ENCODE measurements at regions of chr19 and their contacts with region 1.

Region 1: GRCh38 chr19:6372594-6373095 is at the start of gene ALKBH7:
- DNase-seq: peak; percentile 96 to 100 (median 99)
- H3K4me3 ChIP-seq: peak within 1 kb of the TSS; percentile 88
- H3K27ac ChIP-seq: peak within 1 kb of the TSS; percentile 63 to 97
- H3K4me1 ChIP-seq: peaks cover 5% of the 10 kb centered on the region
- H3K27me3 ChIP-seq: no peaks in the 10 kb centered on the region
- CTCF ChIP-seq: peak in 1 of 3 donors; percentile 24
- EP300 ChIP-seq: peak; percentile 16
- POLR2A ChIP-seq: peak; percentile 35
- total RNA-seq, gene ALKBH7: 66.7 to 118 (median 99.0) TPM

Region 2: GRCh38 chr19:6279931-6280591 is 92.6 kb before region 1 on chr19 and contains the start of gene MLLT1:
- intact Hi-C with region 1: loop called in 1 of 4 experiments (anchors 10 kb)
- DNase-seq: peak; percentile 97 to 99 (median 98)
- H3K4me3 ChIP-seq: peak within 1 kb of the TSS; percentile 66
- H3K27ac ChIP-seq: peak within 1 kb of the TSS; percentile 79 to 91
- H3K4me1 ChIP-seq: peaks cover 23% of the 10 kb centered on the region
- H3K27me3 ChIP-seq: no peaks in the 10 kb centered on the region
- CTCF ChIP-seq: peak; percentile 47 to 72 (median 56)
- EP300 ChIP-seq: no peak
- POLR2A ChIP-seq: peak; percentile 43
- total RNA-seq, gene MLLT1: 16.3 to 116 (median 95.8) TPM

Region 3: DNA sequence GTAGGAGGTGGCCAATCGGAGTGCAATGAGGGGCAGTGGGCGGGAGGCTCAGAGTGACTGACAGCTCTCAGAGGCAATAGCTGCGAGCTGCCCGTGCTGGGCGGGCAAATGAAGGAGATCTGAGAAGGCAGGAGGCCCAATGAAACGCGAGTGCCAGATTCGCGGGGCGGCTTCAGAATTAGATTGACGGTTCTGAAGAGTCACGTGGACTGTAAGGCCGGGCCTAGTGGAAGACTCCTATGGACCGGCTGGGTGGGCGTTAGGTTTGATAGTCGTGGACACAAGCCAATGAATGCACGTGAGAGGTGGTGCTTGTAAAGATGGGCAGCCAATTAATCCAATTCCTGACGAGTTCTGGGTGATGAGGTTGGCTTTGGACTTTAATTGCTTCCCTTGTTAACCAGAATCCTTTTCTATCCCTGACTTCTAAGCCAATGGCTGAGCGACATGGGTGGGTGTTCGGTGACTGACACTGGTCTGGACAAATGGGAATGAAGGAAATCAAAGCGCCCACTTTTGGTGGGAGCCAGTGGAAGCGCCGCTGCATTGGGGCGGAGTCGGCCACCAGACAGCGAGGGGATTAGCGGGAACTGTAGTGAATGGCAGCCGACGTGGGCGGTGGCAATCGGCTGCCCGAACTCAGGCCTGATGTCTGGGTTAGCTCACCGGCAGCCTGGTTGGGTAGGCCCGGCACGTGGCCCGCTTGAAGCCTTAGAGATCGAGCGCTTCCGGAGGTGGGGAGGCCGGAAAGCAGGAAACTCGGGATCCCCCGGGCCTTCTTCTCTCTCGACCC is 52.5 kb after region 1 on chr19:
- intact Hi-C with region 1: loop called in 1 of 4 experiments (anchors 10 kb)
- DNase-seq: peak; percentile 99 to 100 (median 100)
- H3K4me3 ChIP-seq: peak overlapping the region; percentile 12
- H3K27ac ChIP-seq: peak overlapping the region; percentile 40 to 89
- H3K4me1 ChIP-seq: peaks cover 4% of the 10 kb centered on the region
- H3K27me3 ChIP-seq: no peaks in the 10 kb centered on the region
- CTCF ChIP-seq: no peak
- EP300 ChIP-seq: no peak
- POLR2A ChIP-seq: no peak

Measured in ovary (tissue), 10 donors.